GM12878 (cell line): ENCODE measurements at regions of chr5 and their contacts with region 1.

Region 1: GRCh38 chr5:140169410-140169809 is 5.6 kb upstream of the CYSTM1 start:
- DNase-seq: no peak
- ATAC-seq: peak; percentile 68
- H3K4me3 ChIP-seq: no peak overlapping the region
- H3K27ac ChIP-seq: no peak overlapping the region
- H3K4me1 ChIP-seq: peaks cover 18% of the 10 kb centered on the region
- H3K27me3 ChIP-seq: no peaks in the 10 kb centered on the region
- CTCF ChIP-seq: peak in 1 of 3 experiments; percentile 47; a peak in 2 of 6 replicates
- EP300 ChIP-seq: no peak
- POLR2A ChIP-seq: no peak
- RAD21 ChIP-seq: 0 out of 2 replicates have a peak, but pooled peaks have one; percentile 10

Region 2: DNA sequence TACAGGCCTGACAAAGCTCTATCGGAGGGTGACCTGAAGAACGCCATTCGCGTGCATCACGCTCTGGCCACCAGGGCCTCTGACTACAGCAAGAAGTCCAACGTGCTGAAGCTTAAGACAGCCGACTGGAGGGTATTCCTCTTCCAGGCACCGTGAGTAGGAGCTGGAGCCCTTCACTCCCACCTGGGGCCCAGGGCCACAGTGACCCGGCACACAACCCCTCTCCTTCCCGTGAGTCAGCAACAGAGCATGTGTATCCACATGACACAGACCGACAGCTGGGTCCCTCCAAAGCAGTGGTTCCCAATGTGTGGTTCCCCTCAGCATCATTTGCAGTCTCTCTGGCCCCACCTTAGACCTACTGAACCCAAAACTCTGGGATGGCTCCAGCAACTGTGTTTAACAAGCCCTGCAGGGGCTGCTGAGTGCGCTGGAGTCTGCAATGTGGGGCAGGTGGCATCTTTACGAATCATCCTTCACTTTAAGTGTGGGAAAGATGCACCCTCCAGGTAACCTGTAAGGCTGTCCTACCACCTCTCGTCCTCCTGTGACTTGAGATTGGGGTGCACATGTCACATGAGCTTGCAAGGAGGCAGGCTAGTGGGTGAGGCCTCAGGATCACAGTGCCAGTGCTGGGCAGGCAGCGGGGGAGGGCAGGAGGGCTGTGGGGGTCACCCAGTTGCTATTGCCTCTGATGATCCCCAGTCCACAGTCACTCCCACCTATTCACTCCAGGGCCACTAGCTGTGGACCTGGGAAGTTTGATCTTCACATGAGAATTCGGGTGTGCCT is 331.6 kb before region 1 on chr5:
- CTCF ChIA-PET with region 1: no interaction called
- POLR2A ChIA-PET with region 1: no interaction called
- RAD21 ChIA-PET with region 1: no interaction called
- SMC1A ChIA-PET with region 1: no interaction called
- in situ Hi-C with region 1: no loop called
- intact Hi-C with region 1: no loop called
- DNase-seq: no peak
- ATAC-seq: no peak
- H3K4me3 ChIP-seq: no peak overlapping the region
- H3K27ac ChIP-seq: no peak overlapping the region
- H3K4me1 ChIP-seq: no peaks in the 10 kb centered on the region
- H3K27me3 ChIP-seq: no peaks in the 10 kb centered on the region; a peak in 1 of 4 replicates
- CTCF ChIP-seq: no peak
- EP300 ChIP-seq: no peak
- POLR2A ChIP-seq: no peak
- RAD21 ChIP-seq: no peak

Region 3: GRCh38 chr5:140182075-140182709 is 12.8 kb after region 1 on chr5:
- CTCF ChIA-PET with region 1: interaction called, 14 read pairs
- POLR2A ChIA-PET with region 1: interaction called, 9 read pairs
- RAD21 ChIA-PET with region 1: interaction called, 7 read pairs
- SMC1A ChIA-PET with region 1: interaction called, 11 read pairs
- in situ Hi-C with region 1: no loop called
- intact Hi-C with region 1: no loop called
- DNase-seq: no peak
- ATAC-seq: peak; percentile 38
- H3K4me3 ChIP-seq: no peak overlapping the region
- H3K27ac ChIP-seq: no peak overlapping the region
- H3K4me1 ChIP-seq: peaks cover 18% of the 10 kb centered on the region
- H3K27me3 ChIP-seq: no peaks in the 10 kb centered on the region
- CTCF ChIP-seq: no peak
- EP300 ChIP-seq: no peak
- POLR2A ChIP-seq: no peak
- RAD21 ChIP-seq: no peak

Region 4: GRCh38 chr5:140207250-140207964 is 38.0 kb after region 1 on chr5:
- CTCF ChIA-PET with region 1: interaction called, 5 read pairs
- POLR2A ChIA-PET with region 1: interaction called, 3 read pairs
- RAD21 ChIA-PET with region 1: interaction called, 6 read pairs
- SMC1A ChIA-PET with region 1: interaction called, 13 read pairs
- in situ Hi-C with region 1: no loop called
- intact Hi-C with region 1: no loop called
- DNase-seq: no peak
- ATAC-seq: peak; percentile 92
- H3K4me3 ChIP-seq: no peak overlapping the region
- H3K27ac ChIP-seq: peak overlapping the region; percentile 62
- H3K4me1 ChIP-seq: peaks cover 9% of the 10 kb centered on the region
- H3K27me3 ChIP-seq: no peaks in the 10 kb centered on the region
- CTCF ChIP-seq: no peak
- EP300 ChIP-seq: no peak
- POLR2A ChIP-seq: no peak
- RAD21 ChIP-seq: no peak

Region 5: GRCh38 chr5:140220032-140220697 is 50.8 kb after region 1 on chr5:
- CTCF ChIA-PET with region 1: interaction called, 12 read pairs
- POLR2A ChIA-PET with region 1: no interaction called
- RAD21 ChIA-PET with region 1: interaction called, 3 read pairs
- SMC1A ChIA-PET with region 1: interaction called, 4 read pairs
- in situ Hi-C with region 1: no loop called
- intact Hi-C with region 1: loop called (anchors 2 kb)
- DNase-seq: peak; percentile 54
- ATAC-seq: peak; percentile 91
- H3K4me3 ChIP-seq: no peak overlapping the region
- H3K27ac ChIP-seq: peak overlapping the region; percentile 38
- H3K4me1 ChIP-seq: peaks cover 30% of the 10 kb centered on the region
- H3K27me3 ChIP-seq: no peaks in the 10 kb centered on the region
- CTCF ChIP-seq: no peak
- EP300 ChIP-seq: no peak
- POLR2A ChIP-seq: no peak
- RAD21 ChIP-seq: no peak

Region 6: DNA sequence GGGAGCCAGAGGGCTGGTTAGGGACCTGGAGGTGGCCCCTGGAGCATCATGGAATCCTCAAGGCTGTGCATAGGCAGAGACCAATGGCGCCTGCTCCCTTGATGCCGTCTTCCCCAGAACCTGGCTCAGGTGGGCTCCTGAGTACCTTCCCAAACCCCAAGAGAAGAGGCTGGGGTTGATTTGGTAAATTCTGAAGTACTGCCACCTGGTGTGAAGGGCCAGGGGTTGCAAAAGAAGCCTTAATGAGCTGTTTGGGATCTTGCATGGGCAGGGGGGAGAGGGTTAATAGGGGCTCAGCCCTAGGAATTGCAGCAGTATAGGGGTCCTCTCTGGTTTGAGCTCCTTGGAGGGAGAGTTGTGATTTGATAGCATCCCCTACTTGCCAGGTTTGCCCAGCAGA is 57.6 kb after region 1 on chr5:
- CTCF ChIA-PET with region 1: interaction called, 12 read pairs
- POLR2A ChIA-PET with region 1: no interaction called
- RAD21 ChIA-PET with region 1: interaction called, 7 read pairs
- SMC1A ChIA-PET with region 1: interaction called, 13 read pairs
- in situ Hi-C with region 1: no loop called
- intact Hi-C with region 1: no loop called
- DNase-seq: no peak
- ATAC-seq: peak; percentile 49
- H3K4me3 ChIP-seq: no peak overlapping the region
- H3K27ac ChIP-seq: no peak overlapping the region
- H3K4me1 ChIP-seq: peaks cover 3% of the 10 kb centered on the region; the same call in 1 of the 2 replicates
- H3K27me3 ChIP-seq: no peaks in the 10 kb centered on the region
- CTCF ChIP-seq: peak in 1 of 3 experiments; percentile 19; a peak in 1 of 6 replicates
- EP300 ChIP-seq: no peak
- POLR2A ChIP-seq: no peak
- RAD21 ChIP-seq: peak; percentile 39